Activated CD8-positive, alpha-beta T cell treated with anti-CD3 and anti-CD28 coated beads for 36 hours (primary cell): ENCODE measurements at regions of chr4 and their contacts with region 1.

Region 1: DNA sequence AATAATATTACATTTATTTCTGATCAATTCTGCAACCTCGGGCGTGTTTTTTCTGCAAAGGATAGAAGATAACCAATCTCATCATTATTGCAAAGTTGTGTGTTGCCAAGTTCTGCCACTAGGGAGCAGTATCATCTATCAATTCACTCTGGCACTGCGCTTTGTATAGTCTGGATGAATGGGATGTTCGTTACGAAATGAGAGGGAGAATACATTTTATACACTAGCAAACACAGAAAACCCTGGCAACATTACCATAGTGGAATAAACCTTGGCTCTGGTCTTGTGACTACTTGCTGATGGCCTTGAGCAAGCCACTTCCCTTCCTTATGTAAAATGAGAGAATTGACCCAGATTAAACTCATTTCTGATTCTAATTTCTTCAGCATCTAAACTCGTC is 97.5 kb upstream of the ZNF518B start:
- DNase-seq: peak; percentile 65
- ATAC-seq: peak; percentile 69
- H3K4me3 Mint-ChIP-seq: no peak overlapping the region
- H3K27ac Mint-ChIP-seq: no peak overlapping the region
- H3K4me1 Mint-ChIP-seq: peaks cover 6% of the 10 kb centered on the region
- H3K27me3 Mint-ChIP-seq: peaks cover 6% of the 10 kb centered on the region
- CTCF ChIP-seq: peak; percentile 78

Region 2: DNA sequence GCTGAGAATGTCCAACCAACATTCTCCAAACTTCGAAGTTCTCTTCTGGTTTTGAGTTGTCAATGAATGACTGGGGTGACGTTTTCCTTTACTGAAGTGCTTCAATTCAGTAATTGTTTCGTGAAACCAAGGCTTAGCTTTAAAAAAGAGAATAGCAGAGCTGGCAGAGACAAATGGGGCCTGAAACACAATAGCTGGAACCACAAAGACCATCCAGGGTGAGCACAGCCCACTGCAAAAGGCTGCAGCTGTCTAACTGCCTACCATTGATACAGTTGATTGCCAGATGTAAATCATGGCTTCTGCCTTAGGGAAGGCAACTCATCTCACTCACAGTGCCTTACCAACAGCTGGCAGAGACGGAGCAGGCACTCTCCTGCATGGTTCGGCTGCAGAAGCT is 18.8 kb before region 1 on chr4:
- CTCF ChIA-PET with region 1: interaction called, 13 read pairs
- POLR2A ChIA-PET with region 1: no interaction called
- intact Hi-C with region 1: no loop called
- DNase-seq: no peak
- ATAC-seq: no peak
- H3K4me3 Mint-ChIP-seq: no peak overlapping the region
- H3K27ac Mint-ChIP-seq: no peak overlapping the region
- H3K4me1 Mint-ChIP-seq: no peaks in the 10 kb centered on the region
- H3K27me3 Mint-ChIP-seq: no peaks in the 10 kb centered on the region
- CTCF ChIP-seq: no peak